WTC11 (cell line): ENCODE measurements at regions of chr22 and their contacts with region 1.

Region 1: GRCh38 chr22:35023692-35024363 is 42.1 kb upstream of the ISX start:
- DNase-seq: peak; percentile 95
- ATAC-seq: peak; percentile 91
- H3K4me3 Mint-ChIP-seq: peak overlapping the region; percentile 69
- H3K27ac Mint-ChIP-seq: no peak overlapping the region; the same call in 1 of the 2 replicates
- H3K4me1 Mint-ChIP-seq: peaks cover 12% of the 10 kb centered on the region
- H3K27me3 Mint-ChIP-seq: peaks cover 15% of the 10 kb centered on the region
- CTCF ChIP-seq: peak; percentile 98

Region 2: GRCh38 chr22:34804604-34805003 is 219.2 kb before region 1 on chr22:
- CTCF ChIA-PET with region 1: interaction called, 12 read pairs
- POLR2A ChIA-PET with region 1: no interaction called
- DNase-seq: peak; percentile 33
- ATAC-seq: peak; percentile 88
- H3K4me3 Mint-ChIP-seq: no peak overlapping the region
- H3K27ac Mint-ChIP-seq: no peak overlapping the region
- H3K4me1 Mint-ChIP-seq: peaks cover 25% of the 10 kb centered on the region
- H3K27me3 Mint-ChIP-seq: no peaks in the 10 kb centered on the region
- CTCF ChIP-seq: no peak

Region 3: DNA sequence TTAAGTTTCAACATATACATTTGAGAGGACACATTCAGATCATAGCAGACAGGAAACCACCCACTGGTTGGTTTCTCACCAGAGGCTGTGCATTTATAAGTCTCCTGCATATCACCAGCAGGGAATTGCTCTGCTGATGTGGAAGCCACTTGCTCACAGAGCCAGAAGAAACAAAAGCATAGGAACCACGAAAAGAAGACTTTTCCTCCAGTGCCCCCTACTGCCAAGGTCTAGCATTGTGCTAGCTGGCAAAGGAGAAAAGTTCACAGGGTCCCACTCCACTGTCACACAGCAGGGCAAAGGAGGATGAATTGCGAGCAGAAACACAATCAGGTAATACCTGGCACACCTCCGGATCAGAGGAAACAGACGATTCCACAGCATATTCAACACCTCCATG is 13.3 kb after region 1 on chr22:
- CTCF ChIA-PET with region 1: interaction called, 12 read pairs
- POLR2A ChIA-PET with region 1: no interaction called
- DNase-seq: peak; percentile 50
- ATAC-seq: peak; percentile 85
- H3K4me3 Mint-ChIP-seq: no peak overlapping the region
- H3K27ac Mint-ChIP-seq: no peak overlapping the region
- H3K4me1 Mint-ChIP-seq: peaks cover 12% of the 10 kb centered on the region
- H3K27me3 Mint-ChIP-seq: peaks cover 2% of the 10 kb centered on the region; the same call in 1 of the 2 replicates
- CTCF ChIP-seq: peak; percentile 35; the same call in 1 of the 2 replicates

Region 4: GRCh38 chr22:35064664-35065063 is 40.8 kb after region 1 on chr22:
- CTCF ChIA-PET with region 1: no interaction called
- POLR2A ChIA-PET with region 1: no interaction called
- DNase-seq: no peak
- ATAC-seq: no peak
- H3K4me3 Mint-ChIP-seq: no peak overlapping the region
- H3K27ac Mint-ChIP-seq: no peak overlapping the region
- H3K4me1 Mint-ChIP-seq: 0 out of 2 replicates have a peak, but pooled peaks cover 3% of the 10 kb centered on the region
- H3K27me3 Mint-ChIP-seq: no peaks in the 10 kb centered on the region
- CTCF ChIP-seq: no peak